ENCODE measurements at regions of chr11 and their contacts with region 1.

Region 1: DNA sequence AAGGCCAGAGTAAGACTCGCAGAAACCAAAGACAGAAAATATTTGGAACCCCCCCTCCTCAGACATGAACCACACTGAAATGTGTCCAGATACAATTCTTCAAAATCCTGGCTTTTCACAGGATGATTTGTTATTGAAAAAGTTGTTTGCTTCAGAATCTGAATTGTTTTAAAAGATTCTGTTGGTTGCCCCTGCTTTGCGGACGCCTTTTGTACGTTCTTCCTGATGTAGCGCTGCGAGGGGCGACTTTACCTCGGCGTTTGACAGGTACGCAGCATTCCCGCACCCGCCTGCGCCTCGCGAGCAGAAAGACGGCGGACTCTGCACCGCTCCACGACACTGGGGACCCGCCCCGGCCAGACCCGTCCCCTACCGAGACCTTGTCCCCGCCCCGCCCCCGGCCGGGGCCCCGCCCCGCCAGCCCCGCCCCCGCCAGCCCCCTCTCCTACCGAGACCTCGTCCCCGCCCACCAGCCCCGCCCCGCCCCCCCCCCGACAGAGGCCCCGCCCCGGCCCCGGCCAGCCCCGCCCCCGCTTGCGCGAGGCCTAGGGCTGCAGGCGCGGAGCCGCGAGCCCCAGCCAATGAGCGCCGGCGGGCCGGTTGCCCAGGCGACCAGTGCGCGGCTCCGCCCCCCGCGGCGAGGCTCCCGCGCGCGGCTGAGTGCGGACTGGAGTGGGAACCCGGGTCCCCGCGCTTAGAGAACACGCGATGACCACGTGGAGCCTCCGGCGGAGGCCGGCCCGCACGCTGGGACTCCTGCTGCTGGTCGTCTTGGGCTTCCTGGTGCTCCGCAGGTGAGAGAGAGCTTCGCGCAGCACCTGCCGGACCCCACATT is at the start of gene GLB1L2:
- DNase-seq: peak; percentile 93
- H3K4me3 ChIP-seq: peak within 1 kb of the TSS; percentile 53 to 70 (median 59)
- H3K27ac ChIP-seq: peak within 1 kb of the TSS; percentile 41 to 75 (median 62)
- H3K4me1 ChIP-seq: peaks cover 20 to 25% (median 22%) of the 10 kb centered on the region in 4 donors
- H3K27me3 ChIP-seq: peaks cover 0 to 10% (median 0%) of the 10 kb centered on the region in 4 donors
- CTCF ChIP-seq: no peak
- EP300 ChIP-seq: no peak
- POLR2A ChIP-seq: no peak
- total RNA-seq, gene GLB1L2: 7.1 to 13.1 (median 10.5) TPM

Region 2: GRCh38 chr11:134223836-134224709 is 107.5 kb before region 1 on chr11 and contains the starts of genes NCAPD3 and VPS26B:
- intact Hi-C with region 1: loop called (anchors 10 kb)
- DNase-seq: peak; percentile 100
- H3K4me3 ChIP-seq: peak within 1 kb of the TSS; percentile 75 to 89 (median 88)
- H3K27ac ChIP-seq: peak within 1 kb of the TSS; percentile 84 to 95 (median 89)
- H3K4me1 ChIP-seq: peaks cover 36 to 53% (median 41%) of the 10 kb centered on the region in 4 donors
- H3K27me3 ChIP-seq: no peaks in the 10 kb centered on the region
- CTCF ChIP-seq: no peak
- EP300 ChIP-seq: peak; percentile 9
- POLR2A ChIP-seq: peak; percentile 97
- total RNA-seq, gene NCAPD3: 6.2 to 9.6 (median 8.8) TPM
- total RNA-seq, gene VPS26B: 30.2 to 50.2 (median 41.7) TPM

Region 3: DNA sequence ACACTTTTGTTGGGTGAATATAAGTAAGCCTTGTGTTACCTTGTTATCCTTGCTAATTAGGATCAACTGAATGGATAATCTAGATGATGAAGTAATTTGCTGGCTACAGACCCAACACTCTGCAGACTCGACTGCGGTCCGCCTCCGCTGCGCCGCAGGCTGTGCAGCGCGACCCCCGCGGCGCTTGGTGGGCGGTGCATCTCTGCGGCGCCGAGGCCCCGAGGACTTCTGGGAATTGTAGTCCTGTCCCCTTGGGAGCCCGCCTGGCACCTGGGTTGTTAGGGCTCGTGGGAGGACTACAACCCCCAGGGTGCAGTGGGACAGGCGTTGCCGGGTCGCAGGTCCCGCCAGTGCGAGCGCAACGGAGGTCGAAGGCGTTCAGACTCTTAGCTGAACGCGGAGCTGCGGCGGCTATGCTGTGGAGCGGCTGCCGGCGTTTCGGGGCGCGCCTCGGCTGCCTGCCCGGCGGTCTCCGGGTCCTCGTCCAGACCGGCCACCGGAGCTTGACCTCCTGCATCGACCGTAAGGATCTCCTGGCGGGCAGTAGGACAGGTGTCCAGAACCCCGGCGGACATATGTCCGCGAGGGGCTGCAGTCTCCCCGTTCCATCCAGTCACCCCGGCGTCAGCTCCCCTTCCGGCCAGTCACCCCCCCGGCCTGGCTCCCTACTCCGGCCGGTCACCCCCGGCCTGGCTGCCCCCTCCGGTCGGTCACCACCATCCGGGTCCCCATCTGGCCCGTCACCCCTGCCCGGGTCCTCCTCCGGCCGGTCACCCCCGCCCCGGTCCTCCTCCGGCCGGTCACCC is 78.2 kb before region 1 on chr11 and contains the starts of genes ACAD8 and THYN1:
- intact Hi-C with region 1: loop called (anchors 5 kb)
- DNase-seq: peak; percentile 97
- H3K4me3 ChIP-seq: peak within 1 kb of the TSS; percentile 75 to 96 (median 78)
- H3K27ac ChIP-seq: peak within 1 kb of the TSS; percentile 76 to 81 (median 78)
- H3K4me1 ChIP-seq: peaks cover 15 to 42% (median 31%) of the 10 kb centered on the region in 4 donors
- H3K27me3 ChIP-seq: no peaks in the 10 kb centered on the region
- CTCF ChIP-seq: peak; percentile 19 to 58 (median 43)
- EP300 ChIP-seq: no peak
- POLR2A ChIP-seq: peak; percentile 37
- total RNA-seq, gene ACAD8: 18.3 to 25.0 (median 21.1) TPM
- total RNA-seq, gene THYN1: 34.1 to 59.6 (median 50.2) TPM